Mammary epithelial cell (primary cell): ENCODE measurements at regions of chrX and their contacts with region 1.

Region 1: DNA sequence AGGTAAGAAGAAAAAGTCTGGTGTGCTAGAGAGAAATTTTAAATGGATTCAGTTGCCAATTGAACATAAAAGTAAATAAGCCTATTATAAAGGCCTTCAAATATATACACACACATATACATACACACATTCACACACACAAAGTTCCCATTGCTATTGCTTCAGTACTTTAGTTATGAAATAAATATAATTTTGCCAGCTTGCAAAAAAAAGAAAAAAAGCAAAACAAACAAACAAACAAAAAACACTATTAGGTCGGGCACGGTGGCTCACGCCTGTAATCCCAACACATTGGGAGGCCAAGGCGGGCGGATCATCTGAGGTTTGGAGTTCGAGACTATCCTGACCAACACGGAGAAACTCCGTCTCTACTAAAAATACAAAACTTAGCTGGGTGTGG is 80.3 kb downstream of the SPIN4 start:
- DNase-seq: no peak
- H3K4me3 ChIP-seq: no peak overlapping the region
- H3K27ac ChIP-seq: no peak overlapping the region
- H3K4me1 ChIP-seq: no peaks in the 10 kb centered on the region
- H3K27me3 ChIP-seq: no peaks in the 10 kb centered on the region
- CTCF ChIP-seq: no peak

Region 2: GRCh38 chrX:63258144-63258543 is 12.7 kb before region 1 on chrX:
- CTCF ChIA-PET with region 1: no interaction called
- dilution Hi-C with region 1: no loop called
- in situ Hi-C with region 1: no loop called
- intact Hi-C with region 1: no loop called
- DNase-seq: no peak
- H3K4me3 ChIP-seq: no peak overlapping the region
- H3K27ac ChIP-seq: no peak overlapping the region
- H3K4me1 ChIP-seq: no peaks in the 10 kb centered on the region
- H3K27me3 ChIP-seq: no peaks in the 10 kb centered on the region
- CTCF ChIP-seq: no peak

Region 3: GRCh38 chrX:63299596-63299995 is 28.7 kb after region 1 on chrX:
- CTCF ChIA-PET with region 1: no interaction called
- dilution Hi-C with region 1: no loop called
- in situ Hi-C with region 1: no loop called
- intact Hi-C with region 1: no loop called
- DNase-seq: no peak
- H3K4me3 ChIP-seq: no peak overlapping the region
- H3K27ac ChIP-seq: no peak overlapping the region
- H3K4me1 ChIP-seq: no peaks in the 10 kb centered on the region
- H3K27me3 ChIP-seq: no peaks in the 10 kb centered on the region
- CTCF ChIP-seq: no peak

Region 4: DNA sequence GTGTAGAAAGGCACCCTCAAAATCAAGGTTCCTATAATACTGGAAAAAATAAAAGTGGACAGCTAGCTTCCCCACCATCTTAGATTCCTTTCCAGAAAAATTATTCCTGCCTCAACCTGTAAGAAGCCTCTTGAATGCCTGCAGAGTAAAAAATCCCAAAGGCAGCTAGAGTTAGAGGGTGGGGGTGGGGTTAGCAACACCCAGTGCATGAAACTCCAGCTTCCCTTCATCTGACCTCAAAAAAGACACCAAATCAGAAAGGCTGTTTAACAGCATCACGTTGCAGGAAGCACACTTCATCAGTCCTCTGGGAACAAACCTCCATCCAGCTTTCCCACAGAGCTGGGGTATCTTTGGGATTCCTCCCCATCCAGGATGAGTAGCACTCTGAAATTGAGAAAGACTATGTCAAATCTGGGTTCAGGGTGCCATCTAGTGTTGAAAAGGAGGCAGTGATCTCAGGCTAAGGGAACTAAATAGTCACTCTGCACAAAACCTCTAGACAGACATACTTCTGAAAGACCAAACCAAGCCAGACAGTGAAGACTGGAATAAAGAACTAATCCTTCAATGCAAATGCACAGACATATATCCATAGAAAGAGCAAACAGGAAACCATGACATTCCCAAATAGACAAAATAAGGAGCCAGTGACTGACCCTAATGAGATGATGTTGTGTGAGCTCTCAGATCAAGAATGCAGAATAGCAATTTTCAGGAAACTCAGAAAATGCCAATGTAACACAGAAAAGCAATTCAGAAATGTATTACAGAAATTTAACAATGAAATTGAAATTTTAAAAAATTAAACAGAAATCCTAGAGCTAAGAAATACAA is 416.2 kb after region 1 on chrX:
- CTCF ChIA-PET with region 1: no interaction called
- dilution Hi-C with region 1: no loop called
- in situ Hi-C with region 1: no loop called
- intact Hi-C with region 1: loop called (anchors 5 kb)
- DNase-seq: peak; percentile 41
- H3K4me3 ChIP-seq: no peak overlapping the region
- H3K27ac ChIP-seq: no peak overlapping the region
- H3K4me1 ChIP-seq: no peaks in the 10 kb centered on the region
- H3K27me3 ChIP-seq: no peaks in the 10 kb centered on the region
- CTCF ChIP-seq: peak; percentile 74 to 79